Breast epithelium (tissue), 4 donors: ENCODE measurements at regions of chr19 and their contacts with region 1.

Region 1: DNA sequence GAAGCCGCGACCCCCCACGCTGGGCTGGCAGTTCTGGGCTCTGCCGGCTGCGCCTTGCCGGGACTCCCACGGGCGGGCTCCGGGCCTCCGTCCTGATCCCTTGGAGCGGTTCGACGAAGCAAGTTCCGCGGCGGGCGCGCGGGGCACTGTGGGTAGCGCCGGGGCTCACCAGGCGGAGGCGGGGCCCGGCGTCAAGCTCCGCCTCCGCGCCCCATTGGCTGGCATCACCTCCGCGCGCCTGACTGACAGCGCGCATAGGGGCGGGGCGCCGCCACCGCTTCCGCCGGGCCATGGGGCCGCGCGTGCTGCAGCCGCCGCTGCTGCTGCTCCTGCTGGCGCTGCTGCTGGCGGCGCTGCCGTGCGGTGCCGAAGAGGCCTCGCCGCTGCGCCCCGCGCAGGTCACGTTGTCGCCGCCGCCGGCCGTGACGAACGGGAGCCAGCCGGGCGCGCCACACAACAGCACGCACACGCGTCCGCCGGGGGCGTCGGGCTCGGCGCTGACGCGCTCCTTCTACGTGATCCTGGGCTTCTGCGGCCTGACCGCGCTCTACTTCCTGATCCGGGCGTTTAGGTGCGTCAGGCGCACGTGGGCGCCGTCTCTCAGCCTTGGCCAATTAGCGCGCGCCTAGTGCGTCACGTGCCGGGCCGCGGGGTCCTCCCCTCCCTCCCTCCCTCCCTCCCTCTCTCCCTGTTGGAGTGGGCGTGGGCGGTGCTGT is at the start of gene FAM174C:
- DNase-seq: peak; percentile 94 to 98
- H3K4me3 ChIP-seq: peak within 1 kb of the TSS; percentile 69 to 87 (median 79)
- H3K27ac ChIP-seq: peak within 1 kb of the TSS; percentile 94 to 99
- H3K4me1 ChIP-seq: peaks cover 34 to 49% of the 10 kb centered on the region in 2 donors
- H3K27me3 ChIP-seq: no peaks in the 10 kb centered on the region
- CTCF ChIP-seq: peak in 1 of 3 donors; percentile 13
- POLR2A ChIP-seq: peak; percentile 44
- total RNA-seq, gene FAM174C: 43.9 to 60.6 (median 53.1) TPM

Region 2: DNA sequence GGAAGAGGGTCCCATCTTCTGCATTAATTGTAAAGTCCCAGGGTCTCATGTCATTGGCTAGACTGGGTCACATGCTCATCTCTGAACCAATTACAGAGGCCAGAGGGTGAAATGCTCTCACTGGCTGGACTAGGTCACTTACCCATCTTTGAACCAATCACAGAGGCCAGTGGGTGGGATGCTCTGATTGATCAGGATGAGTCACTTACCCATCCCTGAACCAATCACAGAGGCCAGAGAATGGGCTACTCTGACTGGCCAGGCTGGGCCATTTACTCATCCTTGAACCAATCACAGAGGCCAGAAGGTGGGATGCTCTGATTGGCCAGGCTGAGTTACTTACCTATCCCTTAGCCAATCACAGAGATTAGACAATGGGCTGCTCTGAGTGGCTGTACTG is 519.2 kb before region 1 on chr19:
- intact Hi-C with region 1: no loop called
- DNase-seq: no peak
- H3K4me3 ChIP-seq: no peak overlapping the region
- H3K27ac ChIP-seq: no peak overlapping the region
- H3K4me1 ChIP-seq: no peaks in the 10 kb centered on the region
- H3K27me3 ChIP-seq: no peaks in the 10 kb centered on the region
- CTCF ChIP-seq: no peak
- POLR2A ChIP-seq: no peak

Region 3: DNA sequence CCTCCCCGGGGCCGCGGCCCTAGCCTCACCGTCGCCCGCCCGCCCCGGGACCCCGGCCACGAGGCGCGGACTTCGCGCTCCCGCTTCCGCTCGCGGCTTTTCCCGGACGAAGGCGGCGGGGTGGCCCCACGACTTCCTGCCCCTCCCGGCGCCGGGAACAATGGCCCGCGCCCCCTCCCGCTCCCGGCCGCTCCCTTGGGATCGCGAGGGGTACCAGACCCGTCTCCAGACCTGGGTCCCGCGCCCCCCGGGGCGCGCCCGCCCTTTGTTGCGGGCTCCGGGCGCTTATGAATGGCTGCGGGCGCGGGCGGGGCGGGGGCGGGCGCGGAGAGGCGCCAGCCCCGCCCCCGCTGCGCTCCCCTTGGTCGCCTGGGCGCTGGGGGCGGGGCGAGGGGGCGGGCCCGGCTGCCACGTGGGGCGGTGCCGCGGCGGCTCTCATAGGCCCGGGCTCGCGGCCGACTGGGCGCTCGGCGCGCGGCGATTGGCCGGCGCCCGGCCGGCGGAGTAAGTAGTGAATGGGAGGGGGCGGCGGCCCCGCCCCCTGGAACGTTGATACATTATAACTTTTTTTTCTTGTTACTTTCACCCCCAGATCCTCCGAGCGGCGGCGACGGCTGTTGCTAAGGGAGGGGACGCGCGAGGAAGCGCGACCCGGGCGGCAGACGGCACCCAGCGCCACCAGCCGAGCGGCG is 26.0 kb before region 1 on chr19:
- intact Hi-C with region 1: no loop called
- DNase-seq: peak; percentile 94 to 97
- H3K4me3 ChIP-seq: peak overlapping the region; percentile 83 to 97 (median 94)
- H3K27ac ChIP-seq: peak overlapping the region; percentile 99
- H3K4me1 ChIP-seq: peaks cover 29 to 36% of the 10 kb centered on the region in 2 donors
- H3K27me3 ChIP-seq: no peaks in the 10 kb centered on the region
- CTCF ChIP-seq: no peak
- POLR2A ChIP-seq: peak; percentile 95

Region 4: DNA sequence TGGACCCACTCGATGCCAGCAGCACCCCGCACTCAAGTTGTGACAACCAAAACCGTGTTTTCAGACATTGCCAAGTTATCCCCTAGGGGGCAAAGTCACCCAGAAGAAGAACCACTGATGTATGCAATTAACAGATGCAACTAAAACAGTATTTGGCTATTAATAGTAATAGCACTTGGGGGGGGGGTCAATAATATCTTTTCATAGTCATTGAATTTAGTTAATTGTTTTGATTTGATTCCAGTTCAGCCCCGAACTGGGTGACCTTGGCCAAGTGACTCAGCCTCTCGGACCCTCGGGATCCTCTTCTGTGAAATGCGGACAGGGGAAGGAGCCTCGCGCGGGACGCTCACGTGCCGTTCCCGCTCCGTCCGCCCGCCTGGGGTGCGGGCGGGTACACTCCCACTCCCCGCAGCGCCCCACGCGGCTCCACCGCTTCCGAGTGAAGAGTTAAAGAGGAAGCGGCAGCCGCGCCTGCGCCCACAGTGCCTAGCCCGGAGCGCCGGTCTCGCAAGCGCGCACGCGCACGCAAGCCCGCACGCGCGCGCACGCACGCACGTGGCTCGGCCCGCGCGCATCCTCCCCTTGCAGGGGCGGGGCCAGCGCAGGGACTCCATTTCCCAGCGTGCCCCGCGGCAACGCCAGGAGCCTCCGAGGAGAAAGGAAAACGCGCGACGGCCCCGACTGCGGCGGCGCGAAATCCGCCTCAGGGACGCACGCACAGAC is 131.5 kb after region 1 on chr19:
- intact Hi-C with region 1: loop called (anchors 10 kb)
- DNase-seq: peak; percentile 99 to 100
- H3K4me3 ChIP-seq: peak overlapping the region; percentile 98 to 100 (median 100)
- H3K27ac ChIP-seq: peak overlapping the region; percentile 94 to 98
- H3K4me1 ChIP-seq: peaks cover 30 to 35% of the 10 kb centered on the region in 2 donors
- H3K27me3 ChIP-seq: no peaks in the 10 kb centered on the region
- CTCF ChIP-seq: peak; percentile 5 to 54 (median 38)
- POLR2A ChIP-seq: no peak

Region 5: DNA sequence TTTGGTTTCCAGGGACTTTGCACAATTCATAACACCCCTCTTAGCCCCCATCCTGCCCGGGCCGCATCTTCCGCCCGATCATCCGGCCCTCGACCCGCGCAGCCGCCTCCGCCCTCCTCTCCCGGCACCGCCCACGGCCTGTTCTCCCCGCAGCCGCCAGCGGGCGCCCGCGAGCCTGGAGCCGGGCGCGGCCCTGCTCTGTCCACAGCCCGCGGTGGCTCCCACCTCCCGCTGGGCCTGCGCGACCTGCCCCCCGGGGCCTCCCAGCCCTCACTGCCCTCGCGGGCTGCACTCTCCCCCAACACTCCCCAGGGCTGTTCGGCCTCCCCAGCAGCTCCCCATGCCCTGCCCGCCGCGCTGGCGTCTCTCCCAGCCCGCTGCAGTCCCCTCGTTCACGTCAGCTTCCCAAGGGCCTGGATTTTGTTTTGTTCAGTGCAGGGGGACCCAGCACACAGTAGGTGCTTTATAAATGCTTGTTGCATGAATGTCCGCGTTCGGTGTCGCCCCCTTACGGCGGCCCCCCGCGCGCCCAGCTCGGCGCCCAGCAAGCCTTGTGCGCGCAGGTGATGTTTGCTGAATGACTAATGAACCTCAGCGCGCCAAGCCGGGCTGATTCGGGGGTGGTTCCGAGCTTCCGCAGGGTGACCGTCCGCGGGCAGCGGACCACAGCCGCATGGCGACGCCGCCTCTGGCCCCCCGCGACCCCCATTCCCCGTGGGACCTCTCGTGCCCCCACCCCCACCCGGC is 169.9 kb after region 1 on chr19:
- intact Hi-C with region 1: loop called (anchors 10 kb)
- DNase-seq: peak in 1 of 2 donors; percentile 64
- H3K4me3 ChIP-seq: peak overlapping the region; percentile 20 to 66 (median 46)
- H3K27ac ChIP-seq: no peak overlapping the region
- H3K4me1 ChIP-seq: peaks cover 5 to 8% of the 10 kb centered on the region in 2 donors
- H3K27me3 ChIP-seq: peaks cover 33 to 47% of the 10 kb centered on the region in 2 donors
- CTCF ChIP-seq: peak; percentile 35 to 87 (median 48)
- POLR2A ChIP-seq: no peak